ENCODE measurements at regions of chr6 and their contacts with region 1.

Region 1: DNA sequence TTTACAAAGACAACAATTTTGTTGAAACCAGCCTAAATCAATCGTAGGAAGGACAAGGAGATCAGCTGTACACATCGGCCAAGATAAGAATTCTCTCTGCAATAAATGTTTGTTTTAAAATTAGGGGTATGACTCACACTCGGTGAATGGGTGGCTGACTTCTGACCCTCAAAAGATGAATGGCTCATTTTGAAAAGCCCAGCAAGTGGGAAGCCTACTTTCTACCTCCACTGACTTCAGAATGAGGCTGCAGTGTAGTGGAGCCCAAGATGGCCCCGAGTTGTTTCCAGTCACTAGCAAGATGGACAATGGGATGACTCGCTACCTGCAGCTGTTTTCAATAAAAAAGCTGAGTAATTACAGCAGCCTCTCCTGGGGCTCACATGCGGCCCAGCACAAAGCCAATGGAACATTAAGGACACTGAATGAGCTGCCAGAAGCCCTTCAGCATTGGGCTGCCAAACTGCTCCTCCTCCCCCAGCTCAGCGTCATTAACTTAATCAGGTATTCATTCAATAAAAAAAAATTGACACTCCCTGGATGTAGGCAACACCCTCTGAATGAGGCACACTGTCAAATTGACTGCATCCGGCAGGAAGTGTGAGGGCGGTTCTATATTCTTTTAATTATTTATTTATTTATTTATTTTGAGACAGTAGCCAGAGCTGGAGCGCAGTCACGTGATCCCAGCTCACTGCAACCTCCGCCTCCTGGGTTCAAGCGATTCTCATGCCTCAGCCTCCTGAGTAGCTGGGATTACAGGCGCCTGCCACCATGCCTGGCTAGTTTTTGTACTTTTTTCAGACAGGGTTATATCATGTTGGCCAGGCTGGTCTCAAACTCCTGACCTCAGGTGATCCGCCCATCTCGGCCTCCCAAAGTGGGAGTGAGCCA is 107.3 kb downstream of the GMPR start:
- DNase-seq: no peak

Region 2: DNA sequence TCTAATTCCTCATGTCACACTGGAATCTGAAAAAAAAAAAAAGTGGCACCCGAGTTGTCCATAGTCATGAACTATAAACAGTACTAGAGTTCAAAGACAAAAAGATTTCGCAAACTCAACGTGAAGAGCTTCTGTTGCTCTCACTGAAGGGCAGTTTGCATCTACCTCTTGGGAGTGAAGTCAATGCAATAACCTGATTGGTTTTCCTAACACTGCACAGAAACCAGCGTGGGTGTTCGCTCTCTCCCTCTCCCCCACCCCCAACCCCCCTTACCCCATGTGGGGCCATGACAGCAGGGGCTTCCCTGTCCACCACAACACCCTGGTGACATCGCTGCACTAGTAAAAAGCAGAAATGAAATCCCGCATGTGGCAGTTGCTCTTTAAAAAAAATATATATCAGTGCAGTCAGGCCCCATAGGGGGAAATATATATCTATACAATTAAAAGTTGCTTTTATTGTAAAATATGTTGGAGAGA is 40.4 kb before region 1 on chr6:
- intact Hi-C with region 1: no loop called
- DNase-seq: no peak

Region 3: DNA sequence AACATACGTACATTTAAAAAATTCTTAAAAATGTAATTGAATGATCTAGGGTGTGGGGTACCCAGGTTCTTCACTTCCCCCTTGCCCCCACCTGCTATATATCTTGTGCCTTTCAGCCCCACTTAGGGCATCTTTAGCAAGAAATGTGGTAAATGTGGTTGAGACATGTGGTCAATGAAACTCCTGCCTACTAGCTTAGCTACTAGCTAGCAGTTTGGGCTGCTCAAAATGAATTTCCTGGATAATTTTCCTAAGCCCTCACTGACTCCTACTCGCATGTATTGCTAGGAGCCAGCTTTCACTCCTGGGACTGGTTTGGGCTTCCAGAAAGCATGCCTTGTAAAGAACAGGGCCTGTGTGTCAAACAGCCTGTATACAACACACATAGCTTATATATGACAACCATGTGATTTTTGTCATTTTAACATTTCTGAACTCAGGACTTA is 158.3 kb after region 1 on chr6:
- intact Hi-C with region 1: loop called in 1 of 2 experiments (anchors 10 kb)
- DNase-seq: no peak

Measured in posterior vena cava (tissue), 2 donors.